Head of caudate nucleus (tissue), 42 donors: ENCODE measurements at regions of chr2 and their contacts with region 1.

Region 1: GRCh38 chr2:119407430-119408220 is 24.0 kb upstream of the TMEM37 start:
- DNase-seq: peak in 31 of 42 donors; percentile 27 to 84 (median 60)

Region 2: GRCh38 chr2:119338826-119339561 is 68.6 kb before region 1 on chr2:
- intact Hi-C with region 1: no loop called
- DNase-seq: peak in 9 of 42 donors; percentile 10 to 56 (median 28)

Region 3: DNA sequence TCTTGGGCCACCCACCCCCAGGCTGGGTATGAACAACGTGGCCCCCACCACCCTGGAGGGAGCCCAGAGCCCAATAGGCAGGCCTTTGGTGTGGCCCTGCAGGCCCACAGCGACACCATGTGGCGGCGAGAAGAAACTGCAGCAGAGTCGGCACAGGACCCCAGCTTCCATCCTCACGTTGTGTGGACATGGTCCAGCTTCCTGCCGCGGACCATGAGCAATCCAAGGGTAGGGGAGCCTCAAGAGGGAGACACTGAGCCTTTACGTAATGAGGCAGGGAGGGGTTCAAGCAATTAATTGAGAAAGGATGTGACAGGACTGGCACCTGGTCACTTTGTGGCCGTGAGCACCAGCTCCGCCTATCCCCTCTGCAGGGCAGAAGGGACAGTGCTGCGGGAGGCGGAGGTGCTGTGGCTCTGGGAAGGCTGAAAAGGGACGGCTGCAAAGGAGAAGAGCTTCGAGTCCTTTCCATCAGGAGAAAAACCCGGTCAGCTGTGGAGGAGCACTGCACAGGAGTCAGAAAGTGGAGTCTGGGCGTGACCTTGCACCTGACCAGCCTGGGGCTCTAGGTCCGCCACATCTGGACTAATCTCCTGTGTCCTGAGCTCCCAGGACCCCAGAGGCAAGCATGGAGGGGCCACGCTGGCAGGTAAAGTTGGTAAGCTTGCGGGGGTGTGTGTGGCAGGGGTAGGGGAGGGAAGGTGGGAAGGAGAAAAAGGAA is 68.8 kb after region 1 on chr2:
- intact Hi-C with region 1: loop called (anchors 5 kb)
- DNase-seq: peak in 39 of 42 donors; percentile 19 to 83 (median 53)

Region 4: GRCh38 chr2:119678998-119679710 is 271.5 kb after region 1 on chr2 and contains the start of gene TMEM177:
- intact Hi-C with region 1: loop called (anchors 10 kb)
- DNase-seq: peak; percentile 55 to 92 (median 85)